H1 (cell line): ENCODE measurements at regions of chr12 and their contacts with region 1.

Region 1: GRCh38 chr12:30847259-30847658 is 79.3 kb upstream of the TSPAN11 start:
- DNase-seq: no peak
- H3K4me3 ChIP-seq: no peak overlapping the region
- H3K27ac ChIP-seq: no peak overlapping the region
- H3K4me1 ChIP-seq: peaks cover 0 to 4% (median 2%) of the 10 kb centered on the region in 4 experiments; a peak in 2 of 7 replicates
- H3K27me3 ChIP-seq: no peaks in the 10 kb centered on the region; a peak in 1 of 7 replicates
- CTCF ChIP-seq: peak in 2 of 3 experiments; percentile 56 to 76; a peak in 2 of 4 replicates
- EP300 ChIP-seq: no peak
- POLR2A ChIP-seq: no peak
- RAD21 ChIP-seq: peak; percentile 90 to 91

Region 2: GRCh38 chr12:30828686-30829085 is 18.6 kb before region 1 on chr12:
- CTCF ChIA-PET with region 1: interaction called, 14 read pairs
- POLR2A ChIA-PET with region 1: no interaction called
- DNase-seq: no peak
- H3K4me3 ChIP-seq: no peak overlapping the region
- H3K27ac ChIP-seq: no peak overlapping the region
- H3K4me1 ChIP-seq: no peaks in the 10 kb centered on the region; a peak in 1 of 7 replicates
- H3K27me3 ChIP-seq: peaks cover 0 to 9% (median 8%) of the 10 kb centered on the region in 4 experiments; a peak in 5 of 7 replicates
- CTCF ChIP-seq: no peak
- EP300 ChIP-seq: no peak
- POLR2A ChIP-seq: no peak
- RAD21 ChIP-seq: no peak

Region 3: DNA sequence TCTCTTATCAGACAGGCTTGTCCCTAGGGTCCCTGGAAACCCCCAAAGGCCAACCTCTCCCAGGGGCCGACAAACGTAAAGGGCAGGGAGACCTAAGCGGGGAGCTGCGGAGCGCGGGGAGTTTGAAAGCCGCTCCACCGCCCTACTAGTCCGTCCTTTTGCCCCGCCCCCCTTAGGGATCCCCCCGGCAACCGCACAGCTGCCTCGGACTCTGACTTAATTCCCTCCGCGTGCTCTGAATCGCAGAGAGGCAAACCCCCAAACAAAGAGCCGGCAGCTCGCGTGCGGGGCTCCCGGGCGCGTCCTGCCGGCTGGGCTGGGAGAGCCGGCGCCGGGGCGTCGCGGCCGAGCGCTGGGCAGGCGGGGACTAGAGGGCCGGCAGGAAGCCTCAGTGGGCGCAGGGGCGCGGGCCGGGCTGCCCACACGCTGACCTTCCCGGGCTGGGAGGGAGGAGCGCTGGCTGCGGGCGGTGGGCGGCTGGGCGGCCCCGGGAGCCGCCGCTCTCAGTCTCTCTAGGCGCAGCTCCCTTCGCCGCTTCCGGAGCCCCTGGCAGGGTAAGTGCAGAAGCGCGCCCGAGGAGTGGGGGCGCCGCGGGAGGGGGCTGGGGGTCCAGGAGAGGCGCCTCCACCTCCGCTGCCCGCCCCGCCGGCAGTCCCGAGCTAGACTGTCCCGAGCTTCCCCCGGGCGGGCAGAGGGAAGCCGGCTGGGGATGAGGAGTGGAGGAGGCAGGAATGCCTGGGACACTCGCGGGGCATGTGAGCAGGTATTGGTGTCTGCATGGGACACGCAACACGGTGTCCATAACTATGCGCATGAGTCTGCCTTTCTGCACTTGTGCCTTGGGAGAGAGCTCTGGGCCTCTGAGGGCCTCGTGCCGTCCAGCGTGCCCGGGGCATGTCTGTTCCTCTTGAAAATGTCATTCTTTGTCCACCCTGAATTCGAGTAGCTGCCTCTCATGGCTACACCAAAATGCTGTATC is 79.3 kb after region 1 on chr12 and contains the start of gene TSPAN11:
- CTCF ChIA-PET with region 1: interaction called, 16 read pairs
- POLR2A ChIA-PET with region 1: interaction called, 7 read pairs
- DNase-seq: peak; percentile 27 to 79
- H3K4me3 ChIP-seq: peak within 1 kb of the TSS; percentile 27 to 70 (median 48)
- H3K27ac ChIP-seq: no peak within 1 kb of the TSS
- H3K4me1 ChIP-seq: peaks cover 4 to 12% (median 6%) of the 10 kb centered on the region in 4 experiments
- H3K27me3 ChIP-seq: peaks cover 0 to 37% (median 28%) of the 10 kb centered on the region in 4 experiments; a peak in 6 of 7 replicates
- CTCF ChIP-seq: no peak
- EP300 ChIP-seq: no peak; a peak in 1 of 3 replicates
- POLR2A ChIP-seq: peak in 1 of 2 experiments; percentile 39; a peak in 2 of 3 replicates
- RAD21 ChIP-seq: peak in 1 of 2 experiments; percentile 8; a peak in 1 of 4 replicates
- total RNA-seq, gene TSPAN11: 3.9 and 4.0 TPM in 2 replicates

Region 4: DNA sequence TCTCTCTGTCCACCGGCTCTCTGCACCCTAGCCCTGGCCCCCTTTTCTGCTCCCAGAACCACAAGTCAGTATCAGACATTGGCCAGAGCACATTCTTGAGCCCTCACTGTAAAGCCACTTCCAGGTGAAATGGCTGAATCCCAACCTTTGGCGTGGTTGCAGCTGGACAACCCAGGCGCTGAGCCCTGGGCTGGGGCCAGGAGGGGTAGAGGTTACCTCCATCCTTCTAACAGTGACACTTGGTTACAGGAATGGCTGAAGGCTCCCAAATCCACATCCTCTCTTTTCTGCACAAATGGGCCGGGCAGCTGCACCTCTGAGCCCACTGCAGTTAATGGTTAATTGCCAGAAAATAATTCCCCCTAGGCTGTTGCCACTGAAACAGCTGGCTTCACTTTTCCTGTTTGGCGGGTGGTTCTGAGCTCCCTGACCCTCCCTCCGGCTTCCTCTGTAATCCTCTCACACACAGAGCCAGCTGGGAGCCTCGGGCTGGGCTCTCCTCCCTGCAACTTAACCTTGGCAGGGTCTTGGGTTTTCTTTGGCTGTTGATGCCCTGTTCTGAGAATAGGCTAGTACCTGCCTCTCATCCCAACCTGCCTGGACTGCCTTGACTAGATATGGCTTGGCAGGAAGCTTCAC is 123.4 kb after region 1 on chr12:
- CTCF ChIA-PET with region 1: interaction called, 34 read pairs
- POLR2A ChIA-PET with region 1: interaction called, 3 read pairs
- DNase-seq: no peak
- H3K4me3 ChIP-seq: no peak overlapping the region
- H3K27ac ChIP-seq: no peak overlapping the region
- H3K4me1 ChIP-seq: 0 out of 7 replicates have a peak, but pooled peaks cover 0 to 3% (median 0%) of the 10 kb centered on the region in 4 experiments
- H3K27me3 ChIP-seq: peaks cover 0 to 8% (median 0%) of the 10 kb centered on the region in 4 experiments; a peak in 2 of 7 replicates
- CTCF ChIP-seq: no peak
- EP300 ChIP-seq: no peak
- POLR2A ChIP-seq: no peak
- RAD21 ChIP-seq: no peak

Region 5: DNA sequence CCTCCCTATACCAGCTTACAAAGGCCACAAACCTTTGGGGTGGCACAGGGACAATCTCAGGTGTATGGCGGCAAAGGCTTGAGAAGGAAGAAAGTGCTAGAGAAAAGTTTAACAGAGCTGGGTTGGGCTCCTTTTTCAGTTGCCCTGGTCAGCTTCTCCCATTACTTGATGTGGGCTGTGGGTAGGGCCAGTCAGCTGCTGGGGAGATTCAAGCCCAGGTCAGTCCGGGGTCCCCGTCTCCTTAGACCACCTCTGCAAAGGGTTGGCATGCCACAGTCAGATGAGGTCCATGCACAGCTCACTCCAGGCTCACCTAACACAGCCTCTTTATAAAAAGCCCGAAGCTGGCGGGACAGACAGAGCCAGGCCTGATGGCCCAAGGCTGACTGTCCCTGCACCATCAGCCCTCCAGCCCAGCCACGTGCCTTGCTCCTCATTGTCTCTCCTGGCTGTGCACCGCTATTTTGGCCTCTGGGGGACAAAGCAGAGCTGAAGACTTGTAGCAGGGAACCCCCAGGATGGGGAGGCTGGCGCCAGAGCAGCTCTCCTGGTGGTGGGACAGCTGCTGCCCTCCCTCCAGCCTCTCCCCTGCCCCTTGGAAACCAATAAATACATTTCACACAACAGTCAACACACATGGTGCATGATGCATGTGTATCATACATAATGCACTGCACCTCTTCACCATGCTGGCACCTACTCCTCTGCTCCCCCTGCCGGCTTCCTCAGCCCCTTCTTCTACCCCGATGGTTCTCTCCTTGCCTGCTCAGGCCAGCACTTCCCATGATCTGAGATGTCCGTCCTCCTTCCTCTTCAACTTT is 164.7 kb after region 1 on chr12:
- CTCF ChIA-PET with region 1: interaction called, 12 read pairs
- POLR2A ChIA-PET with region 1: no interaction called
- DNase-seq: no peak
- H3K4me3 ChIP-seq: no peak overlapping the region
- H3K27ac ChIP-seq: no peak overlapping the region
- H3K4me1 ChIP-seq: peaks cover 0 to 3% (median 0%) of the 10 kb centered on the region in 4 experiments; a peak in 1 of 7 replicates
- H3K27me3 ChIP-seq: no peaks in the 10 kb centered on the region; a peak in 1 of 7 replicates
- CTCF ChIP-seq: peak in 1 of 3 experiments; percentile 19; a peak in 1 of 4 replicates
- EP300 ChIP-seq: no peak
- POLR2A ChIP-seq: no peak
- RAD21 ChIP-seq: no peak

Region 6: DNA sequence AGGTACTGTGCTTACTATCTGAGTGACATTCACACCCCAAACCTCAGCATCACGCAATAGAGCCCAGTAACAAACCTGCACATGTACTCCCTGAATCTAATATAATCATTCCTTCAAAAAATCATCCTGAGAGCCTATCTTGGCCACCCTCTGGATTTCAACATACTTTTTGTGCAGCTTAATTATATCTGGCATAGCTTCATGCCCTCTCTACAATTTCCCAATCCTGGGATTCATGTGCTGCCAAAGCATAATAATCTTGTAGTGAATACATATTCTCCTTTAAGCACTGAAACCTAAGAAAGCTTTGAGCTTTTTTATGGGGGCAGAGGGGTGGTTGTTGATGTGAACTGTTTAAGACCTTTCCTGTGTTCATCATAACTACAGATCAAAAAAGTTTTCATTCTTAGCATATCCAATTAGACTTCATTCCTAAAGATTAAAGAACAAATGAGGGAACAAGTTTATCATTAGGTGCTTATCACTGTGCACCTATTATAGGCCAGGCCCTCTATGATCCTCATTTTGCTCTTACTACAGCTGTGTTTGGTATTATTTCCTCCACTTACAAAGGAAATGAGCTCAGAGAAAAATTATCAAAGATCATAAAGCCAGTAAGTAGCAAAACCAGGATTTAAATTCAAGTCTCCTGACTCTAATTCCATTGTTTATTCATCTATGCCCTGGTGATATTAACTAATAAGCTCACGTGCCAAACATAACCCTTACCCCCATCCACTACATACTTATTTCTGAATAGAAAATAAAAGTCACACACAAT is 427.5 kb after region 1 on chr12:
- CTCF ChIA-PET with region 1: interaction called, 11 read pairs
- POLR2A ChIA-PET with region 1: no interaction called
- DNase-seq: no peak
- H3K4me3 ChIP-seq: no peak overlapping the region
- H3K27ac ChIP-seq: no peak overlapping the region
- H3K4me1 ChIP-seq: no peaks in the 10 kb centered on the region; a peak in 2 of 7 replicates
- H3K27me3 ChIP-seq: no peaks in the 10 kb centered on the region
- CTCF ChIP-seq: no peak
- EP300 ChIP-seq: no peak
- POLR2A ChIP-seq: no peak
- RAD21 ChIP-seq: no peak